ENCODE measurements at regions of chr19 and their contacts with region 1.

Region 1: GRCh38 chr19:11798391-11799330 is at the start of gene ZNF491:
- DNase-seq: no peak
- ATAC-seq: peak; percentile 99
- H3K4me3 ChIP-seq: peak within 1 kb of the TSS; percentile 78
- H3K27ac ChIP-seq: peak within 1 kb of the TSS; percentile 27
- H3K4me1 ChIP-seq: peaks cover 7% of the 10 kb centered on the region
- H3K27me3 ChIP-seq: no peaks in the 10 kb centered on the region
- CTCF ChIP-seq: peak; percentile 17 to 29 (median 22); a peak in 3 of 6 replicates
- EP300 ChIP-seq: no peak
- POLR2A ChIP-seq: peak; percentile 84
- RAD21 ChIP-seq: no peak
- polyA plus RNA-seq, gene ZNF491: 0.18 to 0.49 TPM

Region 2: GRCh38 chr19:11659612-11660011 is 139.0 kb before region 1 on chr19:
- CTCF ChIA-PET with region 1: interaction called, 13 read pairs
- POLR2A ChIA-PET with region 1: no interaction called
- RAD21 ChIA-PET with region 1: no interaction called
- SMC1A ChIA-PET with region 1: no interaction called
- in situ Hi-C with region 1: no loop called
- intact Hi-C with region 1: no loop called
- DNase-seq: no peak
- ATAC-seq: no peak
- H3K4me3 ChIP-seq: no peak overlapping the region
- H3K27ac ChIP-seq: no peak overlapping the region
- H3K4me1 ChIP-seq: no peaks in the 10 kb centered on the region
- H3K27me3 ChIP-seq: no peaks in the 10 kb centered on the region
- CTCF ChIP-seq: peak; percentile 25 to 56 (median 33); a peak in 5 of 6 replicates
- EP300 ChIP-seq: no peak
- POLR2A ChIP-seq: no peak
- RAD21 ChIP-seq: peak; percentile 64

Region 3: GRCh38 chr19:11784356-11784755 is 14.3 kb before region 1 on chr19:
- CTCF ChIA-PET with region 1: interaction called, 10 read pairs
- POLR2A ChIA-PET with region 1: no interaction called
- RAD21 ChIA-PET with region 1: no interaction called
- SMC1A ChIA-PET with region 1: no interaction called
- in situ Hi-C with region 1: no loop called
- intact Hi-C with region 1: no loop called
- DNase-seq: no peak
- ATAC-seq: no peak
- H3K4me3 ChIP-seq: no peak overlapping the region
- H3K27ac ChIP-seq: no peak overlapping the region
- H3K4me1 ChIP-seq: no peaks in the 10 kb centered on the region
- H3K27me3 ChIP-seq: no peaks in the 10 kb centered on the region
- CTCF ChIP-seq: no peak
- EP300 ChIP-seq: no peak
- POLR2A ChIP-seq: no peak
- RAD21 ChIP-seq: no peak

Region 4: GRCh38 chr19:11964858-11965645 is 166.4 kb after region 1 on chr19 and contains the start of gene ZNF763:
- CTCF ChIA-PET with region 1: interaction called, 15 read pairs
- POLR2A ChIA-PET with region 1: no interaction called
- RAD21 ChIA-PET with region 1: interaction called, 16 read pairs
- SMC1A ChIA-PET with region 1: no interaction called
- in situ Hi-C with region 1: no loop called
- intact Hi-C with region 1: no loop called
- DNase-seq: peak; percentile 79
- ATAC-seq: peak; percentile 97
- H3K4me3 ChIP-seq: peak within 1 kb of the TSS; percentile 70
- H3K27ac ChIP-seq: peak within 1 kb of the TSS; percentile 94
- H3K4me1 ChIP-seq: peaks cover 7% of the 10 kb centered on the region
- H3K27me3 ChIP-seq: no peaks in the 10 kb centered on the region
- CTCF ChIP-seq: no peak
- EP300 ChIP-seq: peak; percentile 48 to 63; a peak in 2 of 4 replicates
- POLR2A ChIP-seq: peak; percentile 82
- RAD21 ChIP-seq: no peak
- polyA plus RNA-seq, gene ZNF763: 0.86 to 0.89 TPM

Region 5: DNA sequence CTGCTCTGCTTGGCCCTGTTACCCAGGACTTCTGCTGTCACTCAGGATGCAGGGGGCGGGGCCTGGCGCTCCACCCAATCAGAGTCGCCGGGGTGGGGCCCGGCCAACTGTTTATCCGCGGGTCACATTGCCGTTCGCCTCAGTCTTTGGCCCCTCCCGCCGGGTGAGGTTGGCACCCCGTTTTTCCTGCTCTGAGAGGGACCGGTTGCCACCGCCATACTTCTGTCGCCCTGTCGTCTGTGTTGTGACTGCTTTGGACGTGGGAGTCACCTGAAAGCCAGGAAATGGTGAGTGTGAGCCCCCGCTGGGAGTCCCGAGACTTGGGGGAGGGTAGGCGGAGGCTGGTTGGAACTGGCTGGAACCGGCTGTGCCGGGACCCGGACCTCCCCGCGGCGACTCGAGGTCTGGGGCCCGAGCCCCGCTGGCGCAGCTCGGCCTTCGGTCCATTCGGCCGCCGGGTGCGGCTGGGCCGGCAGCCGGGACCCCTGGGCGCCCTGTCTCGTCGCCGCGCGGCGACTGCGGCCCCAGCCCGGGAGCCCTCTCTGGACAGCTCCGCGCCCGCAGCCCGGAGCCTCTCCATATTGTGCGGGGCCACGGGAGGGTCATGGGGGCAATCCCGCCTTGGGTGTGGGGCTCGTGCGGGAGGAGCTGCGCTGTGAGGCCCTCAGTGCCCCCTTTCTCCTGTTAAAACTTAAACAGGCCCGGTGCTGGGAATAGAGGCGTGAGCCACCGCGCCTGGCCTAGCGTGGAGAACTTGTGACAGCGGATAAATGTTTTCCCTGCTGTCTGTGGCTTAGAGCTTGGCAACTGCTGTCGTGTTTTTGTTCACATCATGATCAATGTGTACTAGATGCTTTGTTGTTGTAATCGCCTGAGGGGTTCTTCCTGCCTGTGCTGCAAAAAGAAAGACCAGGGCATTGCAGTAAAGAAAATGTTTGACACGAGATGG is 266.2 kb after region 1 on chr19 and contains the start of gene ZNF844:
- CTCF ChIA-PET with region 1: interaction called, 17 read pairs
- POLR2A ChIA-PET with region 1: no interaction called
- RAD21 ChIA-PET with region 1: interaction called, 4 read pairs
- SMC1A ChIA-PET with region 1: no interaction called
- in situ Hi-C with region 1: no loop called
- intact Hi-C with region 1: no loop called
- DNase-seq: peak; percentile 48
- ATAC-seq: peak; percentile 20; the same call in 1 of the 3 replicates
- H3K4me3 ChIP-seq: peak within 1 kb of the TSS; percentile 64
- H3K27ac ChIP-seq: peak within 1 kb of the TSS; percentile 86
- H3K4me1 ChIP-seq: no peaks in the 10 kb centered on the region
- H3K27me3 ChIP-seq: no peaks in the 10 kb centered on the region
- CTCF ChIP-seq: no peak
- EP300 ChIP-seq: no peak
- POLR2A ChIP-seq: peak; percentile 97
- RAD21 ChIP-seq: no peak
- polyA plus RNA-seq, gene ZNF844: 0.16 to 0.26 TPM

Measured in GM12878 (cell line).